Activated CD4-positive, alpha-beta T cell treated with anti-CD3 and anti-CD28 coated beads for 36 hours (primary cell): ENCODE measurements at regions of chr14 and their contacts with region 1.

Region 1: GRCh38 chr14:96776791-96777190 is 20.4 kb upstream of the VRK1 start:
- DNase-seq: no peak
- ATAC-seq: no peak
- H3K4me3 Mint-ChIP-seq: no peak overlapping the region
- H3K27ac Mint-ChIP-seq: no peak overlapping the region
- H3K4me1 Mint-ChIP-seq: no peaks in the 10 kb centered on the region
- H3K27me3 Mint-ChIP-seq: peaks cover 8% of the 10 kb centered on the region

Region 2: GRCh38 chr14:96519970-96520369 is 256.8 kb before region 1 on chr14:
- CTCF ChIA-PET with region 1: no interaction called
- POLR2A ChIA-PET with region 1: no interaction called
- intact Hi-C with region 1: no loop called
- DNase-seq: no peak
- ATAC-seq: no peak
- H3K4me3 Mint-ChIP-seq: no peak overlapping the region
- H3K27ac Mint-ChIP-seq: no peak overlapping the region
- H3K4me1 Mint-ChIP-seq: peaks cover 30% of the 10 kb centered on the region
- H3K27me3 Mint-ChIP-seq: no peaks in the 10 kb centered on the region

Region 3: DNA sequence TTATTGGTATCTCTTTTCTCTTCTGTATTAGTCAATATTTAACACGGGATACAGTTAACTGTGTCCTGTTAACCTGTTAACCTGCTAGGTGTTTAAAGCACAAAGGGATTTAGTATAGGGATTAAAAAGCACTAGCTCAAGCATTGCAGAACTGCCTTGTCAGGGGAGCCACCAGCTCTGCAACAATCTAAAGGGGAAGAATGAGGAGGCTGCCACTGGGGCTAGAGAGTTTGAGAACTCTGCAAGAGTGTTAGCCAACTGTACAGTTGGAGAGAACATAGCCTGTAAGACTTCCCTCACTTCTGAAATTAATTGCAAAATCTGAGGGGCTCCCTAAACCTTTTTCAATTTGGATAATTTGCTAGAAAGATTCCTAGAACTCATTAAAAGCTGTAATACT is 13.9 kb after region 1 on chr14:
- CTCF ChIA-PET with region 1: no interaction called
- POLR2A ChIA-PET with region 1: no interaction called
- intact Hi-C with region 1: loop called in 1 of 2 experiments (anchors 1 kb)
- DNase-seq: no peak
- ATAC-seq: no peak
- H3K4me3 Mint-ChIP-seq: no peak overlapping the region
- H3K27ac Mint-ChIP-seq: no peak overlapping the region
- H3K4me1 Mint-ChIP-seq: no peaks in the 10 kb centered on the region
- H3K27me3 Mint-ChIP-seq: peaks cover 14% of the 10 kb centered on the region